ENCODE measurements at regions of chr16 and their contacts with region 1.

Region 1: GRCh38 chr16:30429678-30430427 is at the start of gene DCTPP1:
- DNase-seq: peak; percentile 99
- ATAC-seq: peak; percentile 99
- H3K4me3 Mint-ChIP-seq: no peak within 1 kb of the TSS
- H3K27ac Mint-ChIP-seq: no peak within 1 kb of the TSS
- H3K4me1 Mint-ChIP-seq: peaks cover 40% of the 10 kb centered on the region
- H3K27me3 Mint-ChIP-seq: no peaks in the 10 kb centered on the region
- total RNA-seq, gene DCTPP1: 87.3 to 92.8 TPM

Region 2: GRCh38 chr16:30183233-30184095 is 246.4 kb before region 1 on chr16 and contains the start of gene CORO1A:
- CTCF ChIA-PET with region 1: no interaction called
- POLR2A ChIA-PET with region 1: no interaction called
- DNase-seq: peak; percentile 92
- ATAC-seq: peak; percentile 51
- H3K4me3 Mint-ChIP-seq: peak within 1 kb of the TSS; percentile 98
- H3K27ac Mint-ChIP-seq: peak within 1 kb of the TSS; percentile 99
- H3K4me1 Mint-ChIP-seq: peaks cover 30% of the 10 kb centered on the region
- H3K27me3 Mint-ChIP-seq: no peaks in the 10 kb centered on the region
- total RNA-seq, gene CORO1A: 1,875 to 1,983 TPM

Region 3: GRCh38 chr16:30335598-30336474 is 94.0 kb before region 1 on chr16:
- CTCF ChIA-PET with region 1: no interaction called
- POLR2A ChIA-PET with region 1: no interaction called
- DNase-seq: no peak
- ATAC-seq: peak; percentile 6
- H3K4me3 Mint-ChIP-seq: peak overlapping the region; percentile 81
- H3K27ac Mint-ChIP-seq: peak overlapping the region; percentile 84
- H3K4me1 Mint-ChIP-seq: peaks cover 31% of the 10 kb centered on the region
- H3K27me3 Mint-ChIP-seq: no peaks in the 10 kb centered on the region

Region 4: GRCh38 chr16:30417529-30418349 is 12.1 kb before region 1 on chr16:
- CTCF ChIA-PET with region 1: interaction called, 44 read pairs
- POLR2A ChIA-PET with region 1: interaction called, 4 read pairs
- DNase-seq: peak; percentile 92
- ATAC-seq: peak; percentile 88
- H3K4me3 Mint-ChIP-seq: peak overlapping the region; percentile 61
- H3K27ac Mint-ChIP-seq: peak overlapping the region; percentile 55
- H3K4me1 Mint-ChIP-seq: peaks cover 25% of the 10 kb centered on the region
- H3K27me3 Mint-ChIP-seq: no peaks in the 10 kb centered on the region

Region 5: DNA sequence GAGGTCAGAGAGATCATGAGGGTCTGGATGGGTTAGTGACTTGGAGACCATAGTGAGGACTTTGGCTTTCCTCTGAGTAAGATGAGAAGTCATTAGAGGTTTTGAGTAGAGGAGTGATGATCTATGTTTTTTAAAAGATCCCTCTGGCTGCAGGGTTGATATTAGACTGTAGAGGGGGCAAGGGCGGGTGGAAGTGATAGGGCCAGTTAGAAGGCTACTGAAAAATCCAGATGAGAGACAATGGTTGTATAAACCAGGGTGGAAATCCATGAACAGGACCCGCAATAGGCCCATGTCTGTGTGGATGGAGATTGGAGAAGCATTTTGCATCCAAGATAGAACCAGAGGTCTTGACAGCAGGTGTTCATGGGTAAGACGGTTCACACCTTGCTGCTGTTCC is 52.5 kb after region 1 on chr16:
- CTCF ChIA-PET with region 1: interaction called, 80 read pairs
- POLR2A ChIA-PET with region 1: interaction called, 6 read pairs
- DNase-seq: no peak
- ATAC-seq: no peak
- H3K4me3 Mint-ChIP-seq: no peak overlapping the region
- H3K27ac Mint-ChIP-seq: peak overlapping the region; percentile 40
- H3K4me1 Mint-ChIP-seq: peaks cover 63% of the 10 kb centered on the region
- H3K27me3 Mint-ChIP-seq: no peaks in the 10 kb centered on the region

Region 6: GRCh38 chr16:30519120-30520049 is 89.5 kb after region 1 on chr16:
- CTCF ChIA-PET with region 1: interaction called, 10 read pairs
- POLR2A ChIA-PET with region 1: no interaction called
- DNase-seq: peak; percentile 54
- ATAC-seq: peak; percentile 47
- H3K4me3 Mint-ChIP-seq: no peak overlapping the region
- H3K27ac Mint-ChIP-seq: peak overlapping the region; percentile 50
- H3K4me1 Mint-ChIP-seq: peaks cover 40% of the 10 kb centered on the region
- H3K27me3 Mint-ChIP-seq: no peaks in the 10 kb centered on the region

Region 7: DNA sequence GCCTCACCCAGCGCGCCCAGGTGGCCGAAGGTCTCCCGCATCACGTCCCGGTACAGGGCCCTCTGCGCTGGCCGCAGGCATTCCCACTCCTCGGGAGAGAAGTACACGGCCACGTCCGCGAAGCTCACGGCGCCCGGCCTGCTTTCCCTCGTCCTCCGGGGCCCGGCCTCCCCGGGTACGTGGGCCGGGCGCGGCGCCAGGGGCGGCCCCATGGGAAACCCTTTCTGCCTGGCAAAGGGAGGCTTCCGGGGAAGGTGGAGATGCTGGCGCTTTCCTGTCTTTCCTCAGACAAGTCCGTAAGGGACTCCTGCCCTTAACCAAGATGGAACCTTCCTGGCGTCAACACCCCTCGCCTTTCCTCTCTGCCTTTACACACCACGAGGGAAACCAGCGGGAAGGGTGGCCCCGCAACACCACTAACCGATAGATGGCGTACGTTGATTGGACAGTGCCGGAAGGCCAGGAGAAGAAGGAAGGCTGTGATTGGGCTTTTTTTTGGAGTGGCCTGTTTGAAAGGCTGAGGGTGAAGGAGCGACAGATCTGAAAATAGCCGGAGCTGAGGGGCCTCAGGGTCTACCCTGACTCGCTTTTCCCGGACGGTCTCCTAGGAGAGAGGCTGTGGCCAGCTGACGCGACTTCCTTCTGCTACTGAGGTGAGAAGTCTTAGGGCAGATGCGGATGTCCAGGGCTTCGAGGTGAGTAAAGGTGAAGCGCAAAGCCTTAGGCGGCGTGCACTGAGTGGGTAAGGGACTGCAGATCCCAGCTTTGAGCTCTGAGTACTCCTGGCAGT is 155.7 kb after region 1 on chr16 and contains the start of gene ZNF785:
- CTCF ChIA-PET with region 1: interaction called, 11 read pairs
- POLR2A ChIA-PET with region 1: no interaction called
- DNase-seq: peak; percentile 98
- ATAC-seq: peak; percentile 98
- H3K4me3 Mint-ChIP-seq: peak within 1 kb of the TSS; percentile 96
- H3K27ac Mint-ChIP-seq: peak within 1 kb of the TSS; percentile 87
- H3K4me1 Mint-ChIP-seq: peaks cover 30% of the 10 kb centered on the region
- H3K27me3 Mint-ChIP-seq: no peaks in the 10 kb centered on the region
- total RNA-seq, gene ZNF785: 11.7 to 13.7 TPM

Region 8: GRCh38 chr16:30628627-30629540 is 199.0 kb after region 1 on chr16:
- CTCF ChIA-PET with region 1: interaction called, 18 read pairs
- POLR2A ChIA-PET with region 1: interaction called, 3 read pairs
- DNase-seq: peak; percentile 92
- ATAC-seq: peak; percentile 92
- H3K4me3 Mint-ChIP-seq: peak overlapping the region; percentile 45
- H3K27ac Mint-ChIP-seq: peak overlapping the region; percentile 67
- H3K4me1 Mint-ChIP-seq: peaks cover 10% of the 10 kb centered on the region
- H3K27me3 Mint-ChIP-seq: no peaks in the 10 kb centered on the region

Measured in activated CD8-positive, alpha-beta T cell treated with anti-CD3 and anti-CD28 coated beads, Interleukin-2, amount 10 ng/mL, durations not matched to agents 7 days and 5 days (primary cell).